ENCODE measurements at regions of chr15 and their contacts with region 1.

Region 1: GRCh38 chr15:96693990-96694517 is 363.6 kb downstream of the NR2F2 start:
- DNase-seq: peak; percentile 89
- H3K4me3 ChIP-seq: peak overlapping the region; percentile 3
- H3K27ac ChIP-seq: peak overlapping the region; percentile 72
- H3K4me1 ChIP-seq: peaks cover 56% of the 10 kb centered on the region
- H3K27me3 ChIP-seq: no peaks in the 10 kb centered on the region
- CTCF ChIP-seq: no peak

Region 2: DNA sequence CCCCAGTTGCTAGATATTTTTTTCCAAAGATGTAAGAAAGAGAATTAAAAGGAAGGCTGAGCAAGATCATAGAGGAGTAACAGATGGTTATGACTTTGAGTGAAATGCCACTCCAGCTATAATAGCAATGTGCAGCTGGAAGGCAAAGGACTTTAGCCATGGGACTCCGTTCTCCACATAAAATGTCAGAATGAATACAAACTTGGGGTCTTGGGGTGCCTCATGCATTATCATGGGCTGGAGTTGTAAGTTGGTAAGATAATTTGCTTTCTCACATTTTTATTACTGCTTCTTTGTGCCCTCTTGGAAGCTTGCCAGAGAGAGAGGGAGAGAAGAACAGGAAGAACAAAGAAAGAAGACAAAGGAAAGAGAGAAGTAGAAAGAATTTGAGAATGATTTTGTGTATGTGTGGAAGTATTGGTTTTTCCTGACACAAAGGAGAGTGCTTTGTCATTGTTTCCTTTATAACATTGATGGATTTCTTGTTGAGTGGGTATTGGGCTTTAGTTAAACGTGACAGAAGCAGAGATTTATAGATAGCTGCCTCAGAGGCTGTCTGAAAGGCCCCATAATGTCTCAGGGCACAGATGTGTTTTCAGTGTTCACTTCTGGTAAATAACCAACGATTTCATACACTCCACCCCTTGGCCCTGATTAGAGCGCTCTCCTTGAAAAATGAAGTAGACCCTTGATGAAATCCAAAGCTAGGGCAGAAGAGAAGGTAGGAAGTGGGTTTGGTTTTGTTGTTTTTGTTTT is 351.8 kb after region 1 on chr15:
- CTCF ChIA-PET with region 1: no interaction called
- POLR2A ChIA-PET with region 1: no interaction called
- intact Hi-C with region 1: no loop called
- DNase-seq: peak; percentile 44
- H3K4me3 ChIP-seq: no peak overlapping the region
- H3K27ac ChIP-seq: no peak overlapping the region
- H3K4me1 ChIP-seq: no peaks in the 10 kb centered on the region
- H3K27me3 ChIP-seq: no peaks in the 10 kb centered on the region
- CTCF ChIP-seq: no peak

Region 3: DNA sequence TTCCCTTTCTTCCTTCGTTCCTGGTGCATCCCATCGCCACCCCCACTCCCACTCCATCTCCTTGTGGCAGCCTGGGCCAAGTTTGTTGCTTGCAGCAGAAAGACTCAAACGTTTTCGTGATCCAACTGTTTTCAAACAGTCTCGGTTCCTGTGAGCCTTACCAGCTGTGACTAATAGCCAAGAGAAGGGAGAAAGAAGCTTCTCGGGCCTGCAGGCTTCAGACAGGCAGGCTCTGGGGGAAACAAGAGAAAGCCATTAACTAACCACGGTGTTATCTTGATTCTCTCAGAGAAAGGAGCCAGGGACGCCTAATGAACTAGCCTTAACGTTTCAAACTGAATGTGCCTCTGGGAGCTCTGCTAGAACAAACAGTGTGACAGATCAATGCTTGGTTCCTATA is 378.5 kb after region 1 on chr15:
- CTCF ChIA-PET with region 1: no interaction called
- POLR2A ChIA-PET with region 1: no interaction called
- intact Hi-C with region 1: loop called (anchors 5 kb)
- DNase-seq: no peak
- H3K4me3 ChIP-seq: no peak overlapping the region
- H3K27ac ChIP-seq: peak overlapping the region; percentile 72
- H3K4me1 ChIP-seq: peaks cover 56% of the 10 kb centered on the region
- H3K27me3 ChIP-seq: no peaks in the 10 kb centered on the region
- CTCF ChIP-seq: no peak

Measured in A673 (cell line).